ENCODE measurements at regions of chr7 and their contacts with region 1.

Region 1: DNA sequence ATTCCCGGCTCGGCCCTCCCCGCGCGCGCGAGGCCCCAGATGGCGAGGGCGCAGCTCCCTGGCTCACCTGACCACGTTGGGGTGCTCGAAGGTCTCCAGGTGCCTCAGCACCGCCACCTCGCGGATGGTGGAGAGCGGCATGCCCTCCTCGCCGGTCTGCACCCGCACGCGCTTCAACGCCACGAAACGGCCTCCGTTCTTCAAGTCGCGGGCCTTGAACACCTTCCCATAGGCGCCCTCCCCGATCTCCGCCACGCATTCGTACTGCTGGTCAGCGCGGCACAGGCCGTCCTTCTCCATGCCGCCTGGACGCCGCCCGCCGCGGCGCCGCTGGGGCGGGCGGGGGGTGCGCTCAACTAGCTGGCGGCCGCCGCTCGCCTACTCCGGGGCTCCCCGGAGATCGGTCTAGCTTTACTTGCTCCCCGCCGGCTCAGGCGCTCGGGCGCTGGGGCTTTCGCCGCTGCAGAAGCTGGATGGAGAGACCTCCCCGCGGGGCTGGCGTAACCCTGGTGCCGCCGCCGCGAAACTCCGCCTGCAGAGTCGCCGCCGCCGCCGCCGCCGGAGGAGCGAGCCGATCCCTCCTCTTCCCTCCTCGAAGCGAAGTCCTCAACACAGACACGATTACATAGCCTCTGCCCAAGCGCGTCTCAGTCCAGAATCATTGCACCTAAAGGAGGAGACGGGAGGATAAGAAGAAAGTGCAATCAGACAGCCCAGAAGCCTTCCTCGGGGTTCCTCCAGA is 3.2 kb downstream of the CDK6 start:
- DNase-seq: peak; percentile 87
- H3K4me3 Mint-ChIP-seq: peak overlapping the region; percentile 97
- H3K27ac Mint-ChIP-seq: peak overlapping the region; percentile 97
- H3K4me1 Mint-ChIP-seq: peaks cover 54% of the 10 kb centered on the region
- H3K27me3 Mint-ChIP-seq: peaks cover 5% of the 10 kb centered on the region

Region 2: DNA sequence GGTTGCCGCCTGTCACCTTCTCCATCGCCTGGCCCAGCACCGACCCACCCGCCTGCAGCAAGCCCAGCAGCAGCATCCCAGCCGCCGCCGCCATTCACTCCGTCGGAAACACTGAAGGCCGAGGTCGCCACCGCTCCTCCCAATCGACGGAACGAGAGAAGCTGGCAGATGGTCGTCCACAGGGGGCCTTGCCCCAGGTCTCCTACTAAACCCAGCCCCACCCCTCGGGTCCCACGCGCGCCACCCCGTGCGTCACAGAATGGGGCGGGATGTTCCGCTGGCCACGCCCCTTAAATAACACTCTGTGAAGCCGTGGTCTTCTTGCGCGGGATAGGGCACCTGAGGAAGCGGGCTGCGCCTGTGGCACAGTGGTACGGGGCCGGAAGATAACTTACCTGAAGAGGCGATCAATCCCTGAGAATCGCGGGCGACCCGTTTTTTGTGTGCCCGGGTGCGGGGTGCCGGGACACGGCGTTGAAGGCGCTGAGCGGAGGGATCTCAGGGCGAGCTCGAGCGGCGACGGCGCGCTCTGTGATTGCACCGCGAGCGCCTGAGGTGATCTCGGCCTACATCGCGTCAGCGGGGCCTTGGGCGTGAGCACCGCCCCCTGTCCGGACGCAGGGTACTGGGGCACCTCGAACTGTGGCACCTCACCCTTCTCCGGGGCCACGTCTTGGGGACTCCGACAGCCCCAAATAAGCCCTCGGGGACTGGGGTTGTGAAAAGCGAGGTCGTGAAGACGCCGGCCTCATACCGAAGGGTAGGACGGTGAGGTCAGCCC is 698.7 kb before region 1 on chr7 and contains the start of gene CYP51A1:
- intact Hi-C with region 1: loop called (anchors 5 kb)
- DNase-seq: peak; percentile 92
- H3K4me3 Mint-ChIP-seq: peak within 1 kb of the TSS; percentile 98
- H3K27ac Mint-ChIP-seq: peak within 1 kb of the TSS; percentile 97
- H3K4me1 Mint-ChIP-seq: peaks cover 44% of the 10 kb centered on the region
- H3K27me3 Mint-ChIP-seq: no peaks in the 10 kb centered on the region
- total RNA-seq, gene CYP51A1: 96.9 and 102 TPM in 2 replicates

Region 3: GRCh38 chr7:92633211-92633906 is 199.8 kb before region 1 on chr7:
- intact Hi-C with region 1: loop called (anchors 1 kb)
- DNase-seq: peak; percentile 48
- H3K4me3 Mint-ChIP-seq: peak overlapping the region; percentile 64
- H3K27ac Mint-ChIP-seq: peak overlapping the region; percentile 94
- H3K4me1 Mint-ChIP-seq: peaks cover 80% of the 10 kb centered on the region
- H3K27me3 Mint-ChIP-seq: no peaks in the 10 kb centered on the region

Region 4: DNA sequence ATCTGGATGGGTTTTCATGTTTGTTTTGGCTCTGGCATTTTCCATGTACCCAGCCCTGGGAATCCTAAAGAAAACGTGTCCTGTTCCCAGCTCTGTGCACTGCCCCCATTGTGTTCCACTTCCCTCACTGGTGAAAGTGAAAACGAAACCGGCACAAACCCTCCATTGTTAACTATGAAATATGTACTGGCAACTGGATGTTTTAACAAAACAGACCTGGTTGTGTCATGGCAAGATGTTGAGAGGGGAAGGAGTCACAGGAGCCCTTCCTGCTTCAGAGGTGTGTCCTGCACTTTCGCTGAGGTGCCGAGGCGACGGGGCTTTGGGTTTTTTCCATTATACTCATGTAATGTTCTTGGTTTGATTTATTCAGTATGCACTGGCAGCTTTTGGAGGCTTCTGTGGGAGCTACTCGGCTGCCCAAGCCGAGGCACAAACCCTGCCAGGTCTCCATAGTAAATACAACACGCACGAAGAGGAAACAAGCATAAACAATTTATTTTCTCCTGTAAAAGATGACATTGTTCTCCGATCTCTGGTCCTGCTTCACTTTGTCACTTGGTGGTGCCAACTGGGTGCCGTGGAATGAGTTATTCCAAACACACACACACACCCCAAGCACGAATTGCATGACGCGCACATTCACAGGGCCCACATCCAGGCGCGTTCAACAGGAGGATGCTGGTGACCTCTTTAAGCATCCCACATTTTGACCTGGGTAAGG is 115.0 kb before region 1 on chr7:
- intact Hi-C with region 1: loop called (anchors 1 kb)
- DNase-seq: peak; percentile 72
- H3K4me3 Mint-ChIP-seq: peak overlapping the region; percentile 81
- H3K27ac Mint-ChIP-seq: peak overlapping the region; percentile 85
- H3K4me1 Mint-ChIP-seq: peaks cover 72% of the 10 kb centered on the region
- H3K27me3 Mint-ChIP-seq: no peaks in the 10 kb centered on the region

Region 5: GRCh38 chr7:92854501-92855238 is 21.5 kb after region 1 on chr7:
- intact Hi-C with region 1: loop called (anchors 1 kb)
- DNase-seq: no peak
- H3K4me3 Mint-ChIP-seq: peak overlapping the region; percentile 4
- H3K27ac Mint-ChIP-seq: peak overlapping the region; percentile 89
- H3K4me1 Mint-ChIP-seq: peaks cover 17% of the 10 kb centered on the region
- H3K27me3 Mint-ChIP-seq: no peaks in the 10 kb centered on the region

Region 6: GRCh38 chr7:93036807-93037206 is 203.6 kb after region 1 on chr7:
- intact Hi-C with region 1: loop called (anchors 1 kb)
- DNase-seq: peak; percentile 53
- H3K4me3 Mint-ChIP-seq: no peak overlapping the region
- H3K27ac Mint-ChIP-seq: peak overlapping the region; percentile 85
- H3K4me1 Mint-ChIP-seq: peaks cover 50% of the 10 kb centered on the region
- H3K27me3 Mint-ChIP-seq: no peaks in the 10 kb centered on the region